ENCODE measurements at regions of chr14 and their contacts with region 1.

Region 1: GRCh38 chr14:21868442-21869046 is 194.9 kb upstream of the OR4E1 start:
- DNase-seq: peak; percentile 68
- ATAC-seq: peak; percentile 100
- H3K4me3 ChIP-seq: no peak overlapping the region
- H3K27ac ChIP-seq: no peak overlapping the region
- H3K4me1 ChIP-seq: no peaks in the 10 kb centered on the region
- H3K27me3 ChIP-seq: no peaks in the 10 kb centered on the region; a peak in 1 of 5 replicates
- CTCF ChIP-seq: peak; percentile 88
- EP300 ChIP-seq: no peak
- POLR2A ChIP-seq: no peak
- RAD21 ChIP-seq: no peak

Region 2: GRCh38 chr14:21852061-21852664 is 16.4 kb before region 1 on chr14:
- CTCF ChIA-PET with region 1: no interaction called
- POLR2A ChIA-PET with region 1: no interaction called
- in situ Hi-C with region 1: no loop called
- intact Hi-C with region 1: loop called (anchors 2 kb)
- DNase-seq: peak; percentile 47
- ATAC-seq: peak; percentile 89
- H3K4me3 ChIP-seq: no peak overlapping the region
- H3K27ac ChIP-seq: no peak overlapping the region
- H3K4me1 ChIP-seq: no peaks in the 10 kb centered on the region
- H3K27me3 ChIP-seq: 0 out of 5 replicates have a peak, but pooled peaks cover 0 to 3% of the 10 kb centered on the region in 2 experiments
- CTCF ChIP-seq: peak; percentile 64
- EP300 ChIP-seq: no peak
- POLR2A ChIP-seq: no peak
- RAD21 ChIP-seq: no peak

Region 3: DNA sequence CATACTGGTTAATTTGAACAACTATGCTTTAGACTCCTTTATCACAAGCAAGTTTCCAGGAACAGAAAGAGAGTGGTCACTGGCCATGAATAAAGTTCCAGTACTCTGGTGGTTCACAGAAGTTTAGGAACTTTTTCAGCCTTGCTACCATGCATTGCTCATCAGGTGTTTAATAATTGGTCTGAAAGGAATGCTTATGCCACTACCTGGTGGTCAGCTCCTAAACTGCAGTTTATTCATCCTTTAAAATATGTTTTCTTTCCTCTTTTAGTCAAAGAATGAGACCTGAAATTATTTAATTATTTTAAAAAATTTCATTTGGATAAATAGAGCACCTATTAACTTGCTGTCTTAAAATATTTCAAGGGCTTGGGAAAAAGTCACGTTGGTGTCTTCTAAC is 65.1 kb after region 1 on chr14:
- CTCF ChIA-PET with region 1: interaction called, 4 read pairs
- POLR2A ChIA-PET with region 1: no interaction called
- in situ Hi-C with region 1: no loop called
- intact Hi-C with region 1: loop called (anchors 1 kb)
- DNase-seq: no peak
- ATAC-seq: peak; percentile 59; the same call in 2 of the 3 replicates
- H3K4me3 ChIP-seq: no peak overlapping the region
- H3K27ac ChIP-seq: no peak overlapping the region
- H3K4me1 ChIP-seq: no peaks in the 10 kb centered on the region
- H3K27me3 ChIP-seq: no peaks in the 10 kb centered on the region
- CTCF ChIP-seq: peak; percentile 19; the same call in 1 of the 2 replicates
- EP300 ChIP-seq: no peak
- POLR2A ChIP-seq: no peak
- RAD21 ChIP-seq: no peak

Measured in HepG2 (cell line).